Dorsolateral prefrontal cortex (tissue), 120 donors: ENCODE measurements at regions of chr19 and their contacts with region 1.

Region 1: DNA sequence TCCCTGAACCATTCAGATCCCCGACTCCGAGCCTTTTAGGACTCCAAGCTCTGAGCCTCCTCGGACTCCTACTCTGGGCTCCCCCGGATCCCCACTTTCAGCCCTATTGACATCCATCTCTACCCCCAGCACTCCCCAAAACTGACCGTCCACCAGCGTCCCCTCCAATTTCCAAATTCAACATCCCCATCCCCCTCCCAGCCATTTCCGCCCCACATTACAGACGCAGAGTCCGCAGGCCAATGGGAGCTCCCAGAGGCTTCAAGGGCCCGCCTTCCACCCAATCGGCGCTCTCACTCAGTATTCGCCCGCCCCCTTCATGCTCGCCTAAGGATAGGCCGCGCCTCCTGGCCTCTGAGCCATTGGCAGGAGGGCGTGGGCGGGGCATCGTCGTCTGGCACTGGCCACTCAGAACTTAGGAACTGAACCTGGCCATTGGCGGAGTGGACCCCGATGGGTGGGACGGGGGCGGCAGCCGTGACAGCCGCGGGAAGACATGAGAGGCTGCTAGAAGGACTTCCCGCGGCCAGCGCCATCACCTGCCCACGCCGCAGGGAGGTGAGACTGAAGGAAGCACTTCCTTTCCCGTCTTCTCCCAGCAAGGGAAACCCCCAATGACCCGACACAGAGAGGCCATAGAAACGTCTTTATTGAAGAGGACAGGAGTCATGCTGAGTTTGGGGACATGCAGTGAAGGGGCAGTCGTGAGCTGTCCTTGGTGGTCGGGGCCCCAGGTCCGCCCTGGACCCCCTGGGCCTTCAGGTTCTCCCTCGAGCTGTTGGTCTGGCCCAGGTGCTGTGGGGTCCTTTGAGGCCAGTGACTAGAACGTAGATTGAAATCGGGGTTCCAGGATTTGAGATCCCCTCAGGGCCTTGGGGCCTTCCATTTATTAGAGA is at the start of gene ALKBH6:
- DNase-seq: peak; percentile 99 to 100 (median 100)
- H3K4me3 ChIP-seq: peak within 1 kb of the TSS; percentile 51 to 93 (median 78)
- H3K27ac ChIP-seq: peak within 1 kb of the TSS in 54 of 59 donors; percentile 23 to 91 (median 77)
- H3K27me3 ChIP-seq: no peaks in the 10 kb centered on the region
- CTCF ChIP-seq: peak in 29 of 56 donors; percentile 5 to 55 (median 21)
- total RNA-seq, gene ALKBH6: 22.0 to 52.4 (median 34.6) TPM

Region 2: GRCh38 chr19:35775298-35776110 is 238.8 kb before region 1 on chr19 and contains the start of gene ARHGAP33:
- intact Hi-C with region 1: loop called in 1 of 2 experiments (anchors 10 kb)
- DNase-seq: peak; percentile 99 to 100 (median 100)
- H3K4me3 ChIP-seq: peak within 1 kb of the TSS; percentile 62 to 98 (median 90)
- H3K27ac ChIP-seq: peak within 1 kb of the TSS in 53 of 59 donors; percentile 20 to 90 (median 82)
- H3K27me3 ChIP-seq: no peaks in the 10 kb centered on the region
- CTCF ChIP-seq: peak in 23 of 56 donors; percentile 7 to 50 (median 17)
- total RNA-seq, gene ARHGAP33: 53.2 to 121 (median 87.3) TPM

Region 3: DNA sequence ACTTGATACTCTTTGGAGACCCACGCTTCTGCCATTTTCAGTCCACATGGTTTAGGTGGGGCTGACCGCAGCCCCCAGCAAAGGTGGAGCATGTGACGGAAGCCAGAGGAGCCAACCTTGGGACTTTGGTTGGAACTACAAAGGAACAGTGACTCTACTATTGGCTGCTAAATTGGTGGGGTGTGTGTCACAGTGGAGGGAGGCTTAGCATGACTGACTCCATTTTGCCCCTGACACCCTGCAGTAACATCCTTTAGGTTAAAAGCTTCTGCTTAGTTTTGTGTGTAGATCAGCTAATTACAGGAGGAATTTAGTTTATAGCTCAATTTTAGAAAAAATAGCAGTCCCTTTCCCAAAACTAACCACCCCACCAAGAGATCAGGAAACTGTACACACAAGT is 12.7 kb before region 1 on chr19:
- intact Hi-C with region 1: loop called in 1 of 2 experiments (anchors 1 kb)
- DNase-seq: no peak
- H3K4me3 ChIP-seq: no peak overlapping the region
- H3K27ac ChIP-seq: peak overlapping the region in 4 of 59 donors; percentile 21 to 98 (median 65)
- H3K27me3 ChIP-seq: no peaks in the 10 kb centered on the region
- CTCF ChIP-seq: no peak

Region 4: GRCh38 chr19:36054119-36054732 is 39.9 kb after region 1 on chr19 and contains the start of gene THAP8:
- intact Hi-C with region 1: loop called in 1 of 2 experiments (anchors 5 kb)
- DNase-seq: peak; percentile 98 to 99 (median 99)
- H3K4me3 ChIP-seq: peak within 1 kb of the TSS; percentile 49 to 98 (median 76)
- H3K27ac ChIP-seq: peak within 1 kb of the TSS; percentile 80 to 100 (median 98)
- H3K27me3 ChIP-seq: no peaks in the 10 kb centered on the region
- CTCF ChIP-seq: peak in 51 of 56 donors; percentile 24 to 69 (median 48)
- total RNA-seq, gene THAP8: 4.2 to 11.7 (median 7.3) TPM